Left cardiac atrium (tissue), 4 donors: ENCODE measurements at regions of chr1 and their contacts with region 1.

Region 1: DNA sequence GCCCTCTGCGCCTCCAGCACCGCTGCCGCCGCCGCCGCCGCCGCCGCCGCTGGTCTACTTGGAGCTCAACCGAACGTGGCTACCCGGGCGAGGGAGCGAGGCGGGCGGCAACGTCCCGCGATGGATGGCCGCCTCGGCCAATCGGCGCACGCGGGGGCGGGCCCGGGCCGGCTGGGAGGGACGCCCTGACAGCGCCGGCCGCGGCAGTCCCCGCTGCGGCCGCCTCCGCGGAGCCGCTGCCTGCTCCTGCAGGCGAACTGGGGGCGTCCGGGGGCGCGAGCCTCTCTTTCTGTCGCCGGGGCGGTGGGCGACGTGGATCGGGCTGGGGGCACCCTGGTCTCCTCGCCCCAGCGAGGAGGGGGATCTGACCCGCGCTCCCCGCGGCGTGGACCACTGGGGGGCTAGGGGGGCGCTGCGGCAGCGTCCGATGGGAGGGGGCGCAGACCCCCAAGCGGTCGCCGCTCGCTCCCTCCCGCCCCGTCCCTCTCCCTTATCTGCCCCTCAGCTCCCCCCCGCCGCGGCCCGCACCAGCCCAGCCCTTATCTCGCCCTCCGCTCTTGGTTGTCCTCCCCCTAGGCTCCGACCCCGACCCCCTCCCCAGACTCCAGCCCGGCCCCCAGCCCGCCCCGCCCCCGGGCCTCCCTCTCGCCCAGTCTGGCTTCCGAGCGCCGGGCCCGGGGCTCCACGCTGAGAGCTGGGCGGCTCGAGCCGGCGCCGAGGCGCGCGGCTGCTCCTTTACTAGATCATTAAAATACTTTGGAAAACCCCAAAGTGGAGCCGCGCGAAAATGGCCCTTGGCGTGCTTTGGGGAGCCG is at the start of gene SSBP3:
- DNase-seq: peak; percentile 93
- ATAC-seq: peak; percentile 92 to 95
- total RNA-seq, gene SSBP3: 23.9 to 45.1 TPM

Region 2: DNA sequence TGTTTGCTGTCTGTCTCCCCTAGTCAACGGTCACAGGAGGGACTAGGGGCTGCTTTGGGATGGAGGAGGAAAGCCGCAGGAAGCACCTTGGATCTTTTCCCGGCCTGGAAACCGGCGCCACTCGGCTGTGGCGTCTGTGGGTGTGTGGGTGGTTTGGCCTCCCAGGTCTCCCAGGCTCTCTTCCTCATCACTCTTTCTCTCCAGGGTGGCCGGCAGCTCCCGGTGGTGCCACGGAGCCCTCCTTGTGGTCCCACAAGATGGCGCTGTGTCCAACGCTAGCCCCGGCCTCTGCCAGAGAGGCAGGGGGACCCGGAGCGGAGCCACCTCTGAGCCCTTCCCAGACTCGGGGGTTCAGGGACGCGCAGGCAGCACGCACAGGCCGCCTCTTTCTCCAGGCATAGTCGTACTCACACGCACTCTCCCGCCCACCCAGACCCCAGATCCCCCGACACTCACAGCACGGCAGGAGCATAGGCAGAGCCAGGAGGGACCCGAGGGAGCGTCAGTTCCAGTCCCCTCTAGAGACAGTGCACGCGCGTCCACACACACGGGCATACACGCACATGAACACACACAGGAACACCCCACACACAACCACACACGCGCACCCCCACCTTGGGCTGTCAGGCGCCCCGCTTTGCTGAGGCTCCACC is 284.9 kb before region 1 on chr1:
- intact Hi-C with region 1: loop called in 1 of 2 experiments (anchors 5 kb)
- DNase-seq: peak; percentile 85
- ATAC-seq: peak; percentile 91 to 92

Region 3: GRCh38 chr1:54273092-54273794 is 133.3 kb before region 1 on chr1:
- intact Hi-C with region 1: loop called (anchors 10 kb)
- DNase-seq: peak; percentile 73
- ATAC-seq: peak; percentile 67 to 78

Region 4: DNA sequence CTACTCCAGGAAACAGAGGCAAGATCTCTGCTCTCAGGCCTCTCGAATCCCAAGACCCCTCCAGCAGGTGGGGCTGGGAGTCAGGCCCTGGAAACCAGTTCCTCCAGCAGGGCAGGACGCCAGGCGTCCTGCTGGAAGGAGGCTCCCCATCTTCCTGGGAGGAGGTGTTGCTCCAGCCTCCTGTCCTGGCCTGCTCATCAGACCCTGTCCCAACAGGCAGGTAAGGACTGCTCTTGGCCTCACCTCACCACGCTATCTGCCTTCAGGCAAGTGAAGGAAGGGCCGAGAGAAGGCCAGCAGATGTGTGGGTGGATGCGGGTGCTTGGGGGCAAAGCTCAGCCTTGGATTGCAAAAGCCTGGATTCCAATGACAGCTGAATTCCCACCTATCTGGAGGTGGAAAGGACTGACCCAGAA is 83.2 kb before region 1 on chr1:
- intact Hi-C with region 1: loop called in 1 of 2 experiments (anchors 10 kb)
- DNase-seq: no peak
- ATAC-seq: peak in 1 of 2 donors; percentile 26

Region 5: GRCh38 chr1:54488779-54489626 is 82.5 kb after region 1 on chr1:
- intact Hi-C with region 1: loop called (anchors 1 kb)
- DNase-seq: peak; percentile 83
- ATAC-seq: peak; percentile 70 to 82